GM18951 (cell line): ENCODE measurements at regions of chr18 and their contacts with region 1.

Region 1: GRCh38 chr18:58101291-58101794 is 57.3 kb downstream of the NEDD4L start:
- POLR2A ChIP-seq: peak; percentile 28

Region 2: DNA sequence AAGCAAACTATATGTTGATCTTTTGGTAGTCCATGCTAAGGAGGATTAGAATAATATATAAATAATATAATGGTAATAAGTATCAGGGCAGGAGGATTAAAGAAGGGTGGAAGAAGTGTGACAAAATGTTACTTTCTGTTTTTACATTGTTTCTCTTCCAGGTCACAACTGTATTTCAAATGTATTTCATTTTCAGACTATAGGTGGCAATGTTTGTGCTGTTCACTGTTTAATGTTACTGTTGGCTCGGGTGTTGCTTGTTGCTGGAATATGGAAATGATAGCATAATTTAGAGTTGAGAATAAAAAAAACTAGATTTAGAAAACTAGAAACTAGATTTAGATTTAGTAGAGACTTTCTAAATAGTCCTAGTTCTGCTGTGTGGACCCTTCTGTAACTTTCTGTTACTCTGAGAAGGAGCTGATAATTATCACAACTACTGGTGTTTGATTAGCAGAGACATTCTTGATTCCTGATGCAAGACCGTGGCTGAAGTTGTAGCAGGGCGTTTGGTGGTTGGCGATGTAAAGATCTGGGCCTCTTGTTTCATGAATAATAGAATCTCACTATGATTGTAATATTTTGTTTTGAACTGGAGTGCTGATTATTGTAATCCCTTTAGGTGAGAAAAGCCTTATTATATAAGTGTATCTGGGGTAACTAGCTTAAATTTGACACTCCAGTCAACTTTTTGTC is 49.4 kb before region 1 on chr18:
- in situ Hi-C with region 1: loop called (anchors 5 kb)
- POLR2A ChIP-seq: no peak

Region 3: GRCh38 chr18:58466636-58467205 is 365.4 kb after region 1 on chr18:
- in situ Hi-C with region 1: no loop called
- POLR2A ChIP-seq: no peak